ENCODE measurements at regions of chr12 and their contacts with region 1.

Region 1: GRCh38 chr12:50825372-50825838 is 17.3 kb upstream of the TMPRSS12 start:
- DNase-seq: no peak
- H3K4me3 ChIP-seq: no peak overlapping the region
- H3K27ac ChIP-seq: no peak overlapping the region
- H3K4me1 ChIP-seq: no peaks in the 10 kb centered on the region
- H3K27me3 ChIP-seq: no peaks in the 10 kb centered on the region
- CTCF ChIP-seq: peak in 2 of 3 experiments; percentile 25 to 31; a peak in 2 of 4 replicates
- EP300 ChIP-seq: no peak
- POLR2A ChIP-seq: no peak
- RAD21 ChIP-seq: peak in 1 of 2 experiments; percentile 56

Region 2: DNA sequence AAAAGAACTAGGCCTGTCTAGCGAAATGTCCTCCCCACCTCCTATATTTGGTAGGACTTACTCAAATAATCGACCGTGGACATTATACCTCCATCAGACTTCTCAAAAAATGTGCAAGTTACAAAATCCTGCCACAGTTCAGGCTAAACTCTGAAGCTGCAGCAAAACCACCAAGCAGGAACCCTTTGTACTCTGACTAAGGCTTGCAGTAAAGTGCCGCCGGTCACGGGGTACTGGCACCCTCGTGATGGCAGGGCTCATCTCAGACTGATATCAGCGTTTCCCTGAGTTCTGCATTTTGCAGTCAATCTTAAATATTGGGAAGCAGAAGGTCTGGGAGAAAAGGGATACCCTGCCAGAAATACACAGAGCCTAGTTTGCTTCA is 183.6 kb after region 1 on chr12:
- CTCF ChIA-PET with region 1: interaction called, 14 read pairs
- POLR2A ChIA-PET with region 1: interaction called, 3 read pairs
- DNase-seq: no peak
- H3K4me3 ChIP-seq: no peak overlapping the region
- H3K27ac ChIP-seq: no peak overlapping the region
- H3K4me1 ChIP-seq: peaks cover 0 to 6% (median 3%) of the 10 kb centered on the region in 4 experiments; a peak in 4 of 7 replicates
- H3K27me3 ChIP-seq: no peaks in the 10 kb centered on the region
- CTCF ChIP-seq: no peak
- EP300 ChIP-seq: no peak
- POLR2A ChIP-seq: no peak
- RAD21 ChIP-seq: no peak